Activated CD4-positive, alpha-beta memory T cell treated with anti-CD3 and anti-CD28 coated beads, Interleukin-2, amount 10 ng/mL, durations not matched to agents 7 days and 5 days (primary cell): ENCODE measurements at regions of chr2 and their contacts with region 1.

Region 1: DNA sequence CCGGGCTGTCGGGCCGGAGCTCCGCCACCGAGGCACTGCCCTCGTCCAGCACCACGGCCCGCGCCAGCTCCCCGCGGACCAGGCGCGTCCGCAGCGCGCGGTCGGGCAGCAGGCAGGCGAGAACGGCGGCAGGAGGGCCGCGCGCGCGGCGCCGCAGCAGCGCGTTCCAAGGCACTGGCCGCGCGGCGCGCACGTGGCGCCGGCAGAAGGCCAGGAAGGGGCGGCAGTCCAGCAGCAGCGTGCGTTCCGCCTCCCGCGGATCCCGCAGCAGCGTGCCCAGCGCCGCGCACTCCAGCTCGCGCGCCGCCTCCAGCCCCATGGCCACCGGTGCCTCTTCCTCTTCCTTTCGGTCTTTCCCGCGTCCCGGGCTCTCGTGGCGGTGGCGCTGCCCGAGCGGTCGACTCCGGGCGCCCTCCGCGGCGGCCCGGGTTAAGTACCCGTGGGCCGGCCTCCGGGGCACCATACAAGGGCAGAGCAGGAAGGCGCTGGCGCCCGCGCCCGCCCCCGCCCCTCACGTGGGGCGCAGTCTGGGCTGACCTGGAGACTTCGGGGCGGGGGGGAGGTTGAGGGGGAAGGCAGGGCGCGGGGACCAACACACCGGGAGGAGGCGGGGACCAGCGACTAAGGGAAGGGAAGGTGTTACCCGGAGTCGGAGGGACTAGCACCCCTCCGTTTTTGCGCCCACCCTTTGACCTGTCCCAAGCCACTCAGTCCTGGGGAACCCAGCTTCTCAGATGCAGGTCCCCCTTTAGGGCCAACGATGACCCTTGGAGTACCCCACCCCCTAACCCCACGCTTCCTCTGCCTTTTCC is at the start of gene DUSP2:
- DNase-seq: peak; percentile 90
- H3K4me3 Mint-ChIP-seq: peak within 1 kb of the TSS; percentile 88
- H3K27ac Mint-ChIP-seq: peak within 1 kb of the TSS; percentile 95
- H3K4me1 Mint-ChIP-seq: peaks cover 67% of the 10 kb centered on the region
- H3K27me3 Mint-ChIP-seq: no peaks in the 10 kb centered on the region
- total RNA-seq, gene DUSP2: 40.8 to 42.5 TPM

Region 2: GRCh38 chr2:96157651-96158553 is 12.7 kb after region 1 on chr2:
- CTCF ChIA-PET with region 1: interaction called, 4 read pairs
- POLR2A ChIA-PET with region 1: interaction called, 91 read pairs
- DNase-seq: peak; percentile 81
- H3K4me3 Mint-ChIP-seq: peak overlapping the region; percentile 59
- H3K27ac Mint-ChIP-seq: peak overlapping the region; percentile 80
- H3K4me1 Mint-ChIP-seq: peaks cover 67% of the 10 kb centered on the region
- H3K27me3 Mint-ChIP-seq: no peaks in the 10 kb centered on the region

Region 3: DNA sequence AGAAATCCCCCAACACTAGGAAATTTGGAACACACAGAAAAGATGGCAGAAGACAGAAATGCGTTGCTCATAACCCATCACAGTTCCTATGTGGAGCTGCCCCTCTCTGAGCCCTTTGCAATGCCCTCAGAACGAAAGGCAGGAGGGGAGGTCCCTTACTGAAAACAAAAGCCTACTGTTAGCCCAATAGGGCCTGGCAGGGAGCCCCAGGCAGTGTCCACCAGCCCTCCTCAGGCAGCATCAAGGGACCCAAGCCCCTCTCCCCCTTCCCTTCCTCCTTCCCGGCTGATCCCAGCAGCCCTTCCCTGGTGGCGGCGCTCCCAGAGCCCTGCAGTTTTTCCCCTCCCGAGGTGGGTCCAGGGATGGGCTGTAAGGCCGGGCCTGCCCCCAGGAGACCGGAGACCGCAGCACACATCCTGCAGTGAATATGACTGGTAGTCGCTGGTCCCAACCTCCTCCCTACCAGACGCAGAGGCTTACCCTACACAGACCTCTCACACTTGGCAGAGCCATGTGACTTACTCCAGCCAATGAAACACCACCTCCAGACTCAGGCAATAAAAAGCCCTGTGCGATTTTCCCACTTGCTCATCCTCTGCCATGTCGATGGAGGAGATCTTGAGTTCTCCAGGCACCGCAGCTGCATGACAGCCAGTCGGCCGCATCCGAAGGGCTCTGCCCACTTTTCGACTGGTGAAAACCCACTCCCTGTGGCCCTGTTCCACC is 19.4 kb after region 1 on chr2:
- CTCF ChIA-PET with region 1: interaction called, 3 read pairs
- POLR2A ChIA-PET with region 1: interaction called, 91 read pairs
- DNase-seq: peak; percentile 81
- H3K4me3 Mint-ChIP-seq: peak overlapping the region; percentile 66
- H3K27ac Mint-ChIP-seq: peak overlapping the region; percentile 94
- H3K4me1 Mint-ChIP-seq: peaks cover 52% of the 10 kb centered on the region
- H3K27me3 Mint-ChIP-seq: no peaks in the 10 kb centered on the region

Region 4: GRCh38 chr2:96933305-96934181 is 788.3 kb after region 1 on chr2:
- CTCF ChIA-PET with region 1: no interaction called
- POLR2A ChIA-PET with region 1: no interaction called
- DNase-seq: no peak
- H3K4me3 Mint-ChIP-seq: no peak overlapping the region
- H3K27ac Mint-ChIP-seq: no peak overlapping the region
- H3K4me1 Mint-ChIP-seq: peaks cover 3% of the 10 kb centered on the region
- H3K27me3 Mint-ChIP-seq: peaks cover 11% of the 10 kb centered on the region